GM12878 (cell line): ENCODE measurements at regions of chr6 and their contacts with region 1.

Region 1: GRCh38 chr6:11514672-11515071 is 22.9 kb upstream of the TMEM170B start:
- DNase-seq: peak; percentile 87
- ATAC-seq: peak; percentile 87
- H3K4me3 ChIP-seq: no peak overlapping the region
- H3K27ac ChIP-seq: peak overlapping the region; percentile 97
- H3K4me1 ChIP-seq: peaks cover 40% of the 10 kb centered on the region
- H3K27me3 ChIP-seq: no peaks in the 10 kb centered on the region
- CTCF ChIP-seq: no peak
- EP300 ChIP-seq: peak in 1 of 2 experiments; percentile 89; a peak in 1 of 4 replicates
- POLR2A ChIP-seq: no peak
- RAD21 ChIP-seq: no peak

Region 2: DNA sequence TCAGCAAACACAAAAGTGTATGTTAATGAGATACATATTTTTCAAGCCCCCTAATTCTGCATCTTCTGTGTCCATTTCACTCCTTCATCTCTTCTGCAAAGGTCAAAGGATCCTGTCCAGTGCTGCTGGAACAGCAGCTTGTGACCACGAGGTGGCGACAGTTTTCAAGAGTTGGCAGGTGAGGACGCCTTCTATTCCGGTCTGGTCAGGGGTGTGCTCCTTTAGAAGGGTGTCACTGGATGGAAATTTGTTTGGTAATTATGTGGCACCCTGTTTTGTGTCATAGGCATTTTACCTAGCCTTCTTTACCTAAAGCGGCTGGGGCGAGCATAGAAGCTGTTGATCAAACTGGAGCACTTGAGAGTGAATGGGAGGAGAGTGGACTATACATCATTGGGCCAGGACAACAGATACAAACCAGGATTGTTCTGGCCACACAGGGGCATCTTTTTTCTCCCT is 370.2 kb before region 1 on chr6:
- CTCF ChIA-PET with region 1: no interaction called
- POLR2A ChIA-PET with region 1: no interaction called
- RAD21 ChIA-PET with region 1: interaction called, 4 read pairs
- SMC1A ChIA-PET with region 1: interaction called, 12 read pairs
- in situ Hi-C with region 1: no loop called
- intact Hi-C with region 1: no loop called
- DNase-seq: peak; percentile 49
- ATAC-seq: peak; percentile 99
- H3K4me3 ChIP-seq: no peak overlapping the region
- H3K27ac ChIP-seq: no peak overlapping the region
- H3K4me1 ChIP-seq: peaks cover 3% of the 10 kb centered on the region; the same call in 1 of the 2 replicates
- H3K27me3 ChIP-seq: no peaks in the 10 kb centered on the region
- CTCF ChIP-seq: peak; percentile 93 to 97 (median 95)
- EP300 ChIP-seq: no peak
- POLR2A ChIP-seq: no peak
- RAD21 ChIP-seq: peak; percentile 100

Region 3: DNA sequence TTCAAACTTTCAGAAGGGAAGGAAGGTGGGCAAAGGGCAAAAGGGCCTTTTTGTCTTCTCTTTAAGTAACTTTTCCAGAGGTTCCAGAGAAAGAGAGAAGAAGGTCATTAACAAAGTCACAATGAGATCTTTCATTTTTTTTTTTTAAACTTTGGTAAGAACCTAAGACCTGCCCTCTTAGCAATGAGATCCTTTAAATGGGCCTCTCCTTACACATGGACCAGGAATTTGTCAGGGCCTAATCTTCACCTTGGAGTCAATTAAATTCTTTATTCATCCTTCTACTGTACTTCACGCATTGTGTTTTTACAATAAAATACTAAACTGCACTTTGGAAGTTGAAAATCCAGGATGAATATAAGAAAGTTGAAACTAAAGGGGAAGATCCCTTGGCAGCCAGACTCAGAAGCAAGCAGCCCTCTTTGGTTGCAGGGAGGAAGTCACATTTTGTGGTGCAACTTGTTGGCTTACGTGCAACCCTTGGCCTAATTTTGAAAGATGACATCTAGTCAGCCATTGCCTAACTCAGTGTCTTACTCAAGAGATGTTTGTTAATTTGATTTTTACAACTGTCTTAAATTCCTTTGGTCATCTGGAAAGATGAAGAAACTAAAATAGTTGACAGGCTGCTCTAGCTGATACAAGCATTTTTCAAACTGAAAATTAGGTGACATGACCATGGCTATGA is 10.9 kb after region 1 on chr6:
- CTCF ChIA-PET with region 1: interaction called, 13 read pairs
- POLR2A ChIA-PET with region 1: interaction called, 8 read pairs
- RAD21 ChIA-PET with region 1: interaction called, 3 read pairs
- SMC1A ChIA-PET with region 1: interaction called, 12 read pairs
- in situ Hi-C with region 1: no loop called
- intact Hi-C with region 1: no loop called
- DNase-seq: no peak
- ATAC-seq: peak; percentile 29; the same call in 1 of the 3 replicates
- H3K4me3 ChIP-seq: no peak overlapping the region
- H3K27ac ChIP-seq: no peak overlapping the region
- H3K4me1 ChIP-seq: no peaks in the 10 kb centered on the region
- H3K27me3 ChIP-seq: no peaks in the 10 kb centered on the region
- CTCF ChIP-seq: no peak
- EP300 ChIP-seq: no peak
- POLR2A ChIP-seq: no peak
- RAD21 ChIP-seq: no peak

Region 4: DNA sequence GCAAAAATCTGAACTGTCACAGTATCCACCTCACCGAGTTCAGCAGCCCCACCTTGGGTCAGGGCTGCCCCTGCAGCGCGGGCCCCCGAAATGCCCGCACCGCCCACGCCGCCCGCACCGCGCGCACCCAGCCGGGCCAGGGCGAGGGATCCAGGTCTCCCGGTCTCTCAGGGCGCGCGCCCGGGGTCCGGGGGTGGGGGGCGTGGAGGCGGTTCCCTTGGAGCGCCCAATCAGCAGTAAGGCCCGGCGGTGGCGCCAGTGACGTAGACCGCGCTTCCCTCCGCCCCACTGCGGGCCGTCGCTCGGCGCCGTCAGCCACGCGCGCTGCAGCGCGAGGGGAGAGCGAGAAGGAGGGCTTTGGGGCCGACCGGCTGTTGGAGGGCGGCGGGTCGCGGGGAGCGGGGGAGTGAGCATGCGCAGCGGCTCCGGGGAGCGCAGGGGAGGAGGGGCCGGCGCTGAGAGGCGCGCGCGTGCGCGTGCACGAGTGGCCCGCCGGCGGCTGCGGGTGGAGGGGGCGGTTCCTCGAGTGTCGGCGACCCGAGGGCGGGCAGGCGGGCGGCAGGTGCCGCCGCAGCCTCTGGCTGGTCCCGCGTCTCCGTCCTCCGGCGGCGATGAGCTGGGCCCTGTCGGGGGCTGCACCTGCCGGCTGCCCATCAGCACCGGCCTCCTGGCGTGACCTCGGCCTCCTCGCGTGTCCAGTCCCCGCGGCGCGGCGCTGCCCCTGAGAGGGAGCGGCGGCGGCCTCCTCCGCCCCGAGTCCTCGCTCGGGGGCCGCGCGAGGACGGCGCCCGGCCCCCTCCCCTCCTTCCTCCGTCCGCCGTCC is 22.8 kb after region 1 on chr6 and contains the start of gene TMEM170B:
- CTCF ChIA-PET with region 1: interaction called, 8 read pairs
- POLR2A ChIA-PET with region 1: interaction called, 7 read pairs
- RAD21 ChIA-PET with region 1: interaction called, 13 read pairs
- SMC1A ChIA-PET with region 1: interaction called, 23 read pairs
- in situ Hi-C with region 1: no loop called
- intact Hi-C with region 1: loop called (anchors 2 kb)
- DNase-seq: peak; percentile 82
- ATAC-seq: peak; percentile 98
- H3K4me3 ChIP-seq: peak within 1 kb of the TSS; percentile 96
- H3K27ac ChIP-seq: peak within 1 kb of the TSS; percentile 69
- H3K4me1 ChIP-seq: no peaks in the 10 kb centered on the region; the same call in 1 of the 2 replicates
- H3K27me3 ChIP-seq: no peaks in the 10 kb centered on the region
- CTCF ChIP-seq: no peak
- EP300 ChIP-seq: 0 out of 4 replicates have a peak, but pooled peaks of 1 of the 2 experiments have one; percentile 5
- POLR2A ChIP-seq: peak; percentile 78
- RAD21 ChIP-seq: no peak
- polyA plus RNA-seq, gene TMEM170B: 1.6 to 1.8 TPM

Region 5: GRCh38 chr6:11542863-11543262 is 28.2 kb after region 1 on chr6:
- CTCF ChIA-PET with region 1: interaction called, 3 read pairs
- POLR2A ChIA-PET with region 1: interaction called, 7 read pairs
- RAD21 ChIA-PET with region 1: interaction called, 13 read pairs
- SMC1A ChIA-PET with region 1: interaction called, 23 read pairs
- in situ Hi-C with region 1: no loop called
- intact Hi-C with region 1: no loop called
- DNase-seq: no peak
- ATAC-seq: no peak
- H3K4me3 ChIP-seq: no peak overlapping the region
- H3K27ac ChIP-seq: no peak overlapping the region
- H3K4me1 ChIP-seq: no peaks in the 10 kb centered on the region
- H3K27me3 ChIP-seq: no peaks in the 10 kb centered on the region
- CTCF ChIP-seq: no peak
- EP300 ChIP-seq: no peak
- POLR2A ChIP-seq: no peak
- RAD21 ChIP-seq: no peak

Region 6: DNA sequence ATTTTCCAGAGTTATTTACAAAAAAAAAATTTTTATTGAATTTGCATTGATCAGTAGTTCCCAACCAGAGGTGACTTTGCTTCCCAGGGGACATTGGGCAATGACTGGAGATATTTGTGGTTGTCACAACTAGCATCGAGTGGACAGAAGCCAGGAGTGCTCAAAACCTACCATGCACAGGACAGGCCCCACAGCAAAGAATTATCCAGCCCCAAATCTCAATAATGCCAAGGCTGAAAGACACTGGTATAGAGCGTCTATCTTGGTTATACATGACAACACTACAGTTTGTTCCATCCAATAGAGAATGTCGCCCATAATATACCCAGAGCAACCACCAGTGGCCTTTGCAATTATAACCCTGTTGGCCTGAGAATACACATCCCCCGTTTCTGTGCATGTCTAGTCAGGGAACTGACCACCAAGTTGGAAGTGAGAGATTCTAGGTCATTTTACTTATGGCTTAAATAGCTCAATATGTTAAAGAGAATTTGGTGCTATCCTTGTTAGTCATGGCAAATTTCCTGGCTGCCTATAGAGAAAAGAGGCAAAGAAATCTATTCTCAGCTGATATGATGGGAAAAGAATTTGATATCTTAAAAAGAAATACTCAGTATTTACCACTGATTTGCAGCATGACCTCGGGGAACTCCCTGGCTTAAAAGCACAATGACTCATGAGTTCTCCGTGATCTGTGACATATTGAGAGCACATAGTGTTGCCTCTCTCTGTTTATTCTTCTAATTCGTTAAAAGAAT is 339.9 kb after region 1 on chr6:
- CTCF ChIA-PET with region 1: no interaction called
- POLR2A ChIA-PET with region 1: no interaction called
- RAD21 ChIA-PET with region 1: no interaction called
- SMC1A ChIA-PET with region 1: no interaction called
- in situ Hi-C with region 1: no loop called
- intact Hi-C with region 1: no loop called
- DNase-seq: no peak
- ATAC-seq: peak; percentile 94
- H3K4me3 ChIP-seq: no peak overlapping the region
- H3K27ac ChIP-seq: peak overlapping the region; percentile 45
- H3K4me1 ChIP-seq: peaks cover 17% of the 10 kb centered on the region
- H3K27me3 ChIP-seq: no peaks in the 10 kb centered on the region
- CTCF ChIP-seq: no peak
- EP300 ChIP-seq: no peak
- POLR2A ChIP-seq: no peak
- RAD21 ChIP-seq: no peak